BJ (cell line): ENCODE measurements at regions of chr9 and their contacts with region 1.

Region 1: GRCh38 chr9:81477669-81478068 is 211.7 kb downstream of the TLE1 start:
- DNase-seq: peak; percentile 74
- H3K4me3 ChIP-seq: no peak overlapping the region
- H3K27me3 ChIP-seq: no peaks in the 10 kb centered on the region
- CTCF ChIP-seq: no peak

Region 2: DNA sequence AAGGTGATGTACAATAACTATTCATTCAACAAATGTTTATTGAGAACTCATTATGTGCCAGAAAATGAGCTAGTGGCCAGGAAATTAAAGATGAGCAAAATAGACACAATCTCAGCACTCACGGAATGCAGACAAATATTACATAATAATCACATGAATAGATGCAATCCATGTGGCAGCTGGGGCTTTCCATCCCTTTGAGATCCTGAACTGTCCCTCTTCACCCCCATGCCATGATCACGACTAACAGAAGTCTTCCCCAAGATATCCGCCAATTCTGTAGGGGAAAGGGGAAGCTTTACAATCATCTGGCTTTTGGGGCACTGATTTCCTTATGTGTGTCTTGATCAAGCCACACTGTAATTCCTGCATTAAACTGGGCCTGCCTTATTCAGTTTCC is 24.3 kb before region 1 on chr9:
- CTCF ChIA-PET with region 1: no interaction called
- POLR2A ChIA-PET with region 1: no interaction called
- DNase-seq: no peak
- H3K4me3 ChIP-seq: no peak overlapping the region
- H3K27me3 ChIP-seq: no peaks in the 10 kb centered on the region
- CTCF ChIP-seq: no peak

Region 3: DNA sequence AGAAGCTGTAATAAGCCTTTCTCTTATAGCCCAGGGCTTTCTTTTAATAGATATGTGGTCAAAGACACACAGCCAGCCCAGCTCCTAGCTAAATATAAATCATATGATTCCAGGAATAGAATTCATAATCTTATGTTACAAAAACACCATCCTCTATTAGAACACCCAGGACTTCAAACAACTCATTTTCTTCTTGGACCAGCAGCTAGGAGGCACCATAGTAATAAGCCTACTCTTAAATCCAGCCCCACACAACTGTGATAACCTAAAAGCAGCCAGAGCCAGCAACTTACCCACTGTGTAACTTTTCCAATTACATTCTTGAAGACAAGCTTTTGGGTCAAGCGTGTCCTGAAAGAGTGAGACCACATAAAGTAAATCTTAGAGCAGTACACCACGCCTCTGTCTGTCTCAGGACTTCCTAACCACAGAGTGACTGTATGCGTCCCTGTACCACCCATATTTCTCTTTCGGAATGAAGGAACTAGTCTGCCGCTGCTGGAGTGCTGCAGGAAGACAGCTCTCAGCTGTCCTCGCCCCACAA is 12.1 kb before region 1 on chr9:
- CTCF ChIA-PET with region 1: interaction called, 11 read pairs
- POLR2A ChIA-PET with region 1: no interaction called
- DNase-seq: no peak
- H3K4me3 ChIP-seq: no peak overlapping the region
- H3K27me3 ChIP-seq: no peaks in the 10 kb centered on the region; the same call in 1 of the 2 replicates
- CTCF ChIP-seq: peak; percentile 23; the same call in 1 of the 2 replicates

Region 4: DNA sequence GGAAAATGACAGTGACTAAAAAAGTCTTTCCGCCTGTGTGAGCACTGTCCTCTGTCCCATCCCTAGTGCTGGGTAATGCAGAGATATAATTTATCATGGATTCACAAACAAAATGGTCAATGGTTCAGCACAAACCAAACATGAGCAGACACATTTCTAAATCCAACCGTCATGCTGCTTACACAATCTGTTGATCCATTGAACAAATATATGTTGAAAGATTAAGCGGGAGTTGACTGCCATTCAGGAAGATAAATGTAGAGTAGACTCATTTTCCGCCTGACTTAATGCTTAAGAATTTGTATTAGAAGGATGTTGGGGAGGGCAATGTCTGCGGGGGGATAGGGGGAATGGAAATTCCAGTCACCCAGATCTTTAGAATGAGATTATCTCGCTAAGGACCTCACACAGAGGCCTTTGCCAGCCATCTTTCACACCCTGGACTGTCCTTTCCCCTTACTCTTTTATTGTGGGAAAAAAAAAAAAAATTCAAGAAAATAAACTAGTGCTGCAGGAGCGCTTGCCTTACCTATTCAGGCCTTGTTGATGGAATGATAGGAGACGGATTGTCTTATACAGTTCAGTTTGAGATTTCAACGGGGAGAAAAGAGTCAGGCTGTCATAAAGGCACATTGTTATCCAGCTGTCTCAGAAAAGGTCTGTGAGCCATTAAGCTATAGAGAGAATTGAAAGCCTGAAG is 58.0 kb after region 1 on chr9:
- CTCF ChIA-PET with region 1: no interaction called
- POLR2A ChIA-PET with region 1: no interaction called
- DNase-seq: no peak
- H3K4me3 ChIP-seq: no peak overlapping the region
- H3K27me3 ChIP-seq: no peaks in the 10 kb centered on the region
- CTCF ChIP-seq: no peak

Region 5: DNA sequence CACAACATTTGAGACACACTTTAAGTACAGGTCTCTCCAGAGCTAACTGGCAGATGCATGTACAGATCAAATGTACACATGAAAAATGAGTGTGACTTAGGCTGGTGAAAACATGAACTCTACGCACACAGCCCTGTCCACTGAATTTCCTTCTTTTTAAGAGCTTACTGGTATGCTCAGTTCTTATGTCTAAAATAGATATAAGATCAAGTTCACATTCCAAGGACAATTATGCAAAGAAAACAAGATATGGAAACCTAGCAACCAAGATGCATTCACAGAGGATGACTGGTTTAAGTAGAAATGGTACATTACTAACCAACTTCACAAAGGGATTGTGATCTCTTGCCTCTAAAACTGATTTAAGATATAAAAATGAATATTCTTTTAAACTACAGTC is 154.9 kb after region 1 on chr9:
- CTCF ChIA-PET with region 1: interaction called, 4 read pairs
- POLR2A ChIA-PET with region 1: interaction called, 15 read pairs
- DNase-seq: peak; percentile 63
- H3K4me3 ChIP-seq: no peak overlapping the region
- H3K27me3 ChIP-seq: no peaks in the 10 kb centered on the region
- CTCF ChIP-seq: no peak